ENCODE measurements at regions of chrX and their contacts with region 1.

Region 1: GRCh38 chrX:63327788-63328187 is 23.3 kb downstream of the SPIN4 start:
- DNase-seq: no peak
- H3K4me3 Mint-ChIP-seq: no peak overlapping the region
- H3K27ac Mint-ChIP-seq: no peak overlapping the region
- H3K4me1 Mint-ChIP-seq: peaks cover 5% of the 10 kb centered on the region
- H3K27me3 Mint-ChIP-seq: no peaks in the 10 kb centered on the region
- CTCF ChIP-seq: no peak

Region 2: GRCh38 chrX:63299596-63299995 is 28.2 kb before region 1 on chrX:
- CTCF ChIA-PET with region 1: no interaction called
- intact Hi-C with region 1: loop called (anchors 2 kb)
- DNase-seq: no peak
- H3K4me3 Mint-ChIP-seq: no peak overlapping the region
- H3K27ac Mint-ChIP-seq: no peak overlapping the region
- H3K4me1 Mint-ChIP-seq: no peaks in the 10 kb centered on the region
- H3K27me3 Mint-ChIP-seq: no peaks in the 10 kb centered on the region
- CTCF ChIP-seq: no peak

Region 3: DNA sequence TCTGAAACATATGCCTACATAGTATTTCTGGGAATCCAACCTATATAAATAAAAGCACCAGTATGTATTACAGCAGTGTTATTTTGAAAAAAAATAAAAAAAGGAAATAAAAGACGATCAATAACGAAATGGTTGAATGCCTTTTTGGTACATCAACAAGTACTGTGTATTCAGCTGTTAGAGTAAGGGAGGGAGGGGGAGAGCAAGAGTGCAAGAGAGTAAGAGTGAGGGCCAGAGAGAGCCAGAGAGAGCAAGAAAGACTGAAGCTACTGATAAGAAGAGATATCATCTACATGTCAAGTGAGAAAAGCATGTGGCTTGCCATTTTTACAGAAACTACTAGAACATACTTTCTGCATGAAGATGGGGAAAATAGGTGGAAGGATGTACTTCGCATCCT is 21.5 kb after region 1 on chrX:
- CTCF ChIA-PET with region 1: no interaction called
- intact Hi-C with region 1: no loop called
- DNase-seq: no peak
- H3K4me3 Mint-ChIP-seq: peak overlapping the region; percentile 96
- H3K27ac Mint-ChIP-seq: peak overlapping the region; percentile 52
- H3K4me1 Mint-ChIP-seq: peaks cover 15% of the 10 kb centered on the region
- H3K27me3 Mint-ChIP-seq: no peaks in the 10 kb centered on the region
- CTCF ChIP-seq: no peak

Region 4: GRCh38 chrX:63754860-63755582 is 427.2 kb after region 1 on chrX:
- CTCF ChIA-PET with region 1: no interaction called
- intact Hi-C with region 1: no loop called
- DNase-seq: peak; percentile 91
- H3K4me3 Mint-ChIP-seq: peak overlapping the region; percentile 79
- H3K27ac Mint-ChIP-seq: peak overlapping the region; percentile 80
- H3K4me1 Mint-ChIP-seq: peaks cover 7% of the 10 kb centered on the region
- H3K27me3 Mint-ChIP-seq: peaks cover 29% of the 10 kb centered on the region
- CTCF ChIP-seq: no peak

Measured in Calu3 (cell line).